CD8-positive, alpha-beta T cell (primary cell): ENCODE measurements at regions of chr17 and their contacts with region 1.

Region 1: GRCh38 chr17:80195731-80196529 is 24.2 kb downstream of the SGSH start:
- DNase-seq: peak; percentile 31 to 81 (median 63)
- ATAC-seq: peak; percentile 52
- H3K4me3 ChIP-seq: no peak overlapping the region
- H3K4me3 Mint-ChIP-seq: no peak overlapping the region
- H3K27ac ChIP-seq: no peak overlapping the region
- H3K27ac Mint-ChIP-seq: no peak overlapping the region
- H3K4me1 ChIP-seq: no peaks in the 10 kb centered on the region
- H3K4me1 Mint-ChIP-seq: no peaks in the 10 kb centered on the region
- H3K27me3 ChIP-seq: no peaks in the 10 kb centered on the region
- H3K27me3 Mint-ChIP-seq: peaks cover 6% of the 10 kb centered on the region
- CTCF ChIP-seq: peak; percentile 97

Region 2: GRCh38 chr17:80109713-80110446 is 86.0 kb before region 1 on chr17:
- CTCF ChIA-PET with region 1: no interaction called
- POLR2A ChIA-PET with region 1: no interaction called
- intact Hi-C with region 1: no loop called
- DNase-seq: no peak
- ATAC-seq: no peak
- H3K4me3 ChIP-seq: no peak overlapping the region
- H3K4me3 Mint-ChIP-seq: no peak overlapping the region
- H3K27ac ChIP-seq: no peak overlapping the region
- H3K27ac Mint-ChIP-seq: no peak overlapping the region
- H3K4me1 ChIP-seq: no peaks in the 10 kb centered on the region
- H3K4me1 Mint-ChIP-seq: no peaks in the 10 kb centered on the region
- H3K27me3 ChIP-seq: no peaks in the 10 kb centered on the region
- H3K27me3 Mint-ChIP-seq: no peaks in the 10 kb centered on the region
- CTCF ChIP-seq: no peak

Region 3: DNA sequence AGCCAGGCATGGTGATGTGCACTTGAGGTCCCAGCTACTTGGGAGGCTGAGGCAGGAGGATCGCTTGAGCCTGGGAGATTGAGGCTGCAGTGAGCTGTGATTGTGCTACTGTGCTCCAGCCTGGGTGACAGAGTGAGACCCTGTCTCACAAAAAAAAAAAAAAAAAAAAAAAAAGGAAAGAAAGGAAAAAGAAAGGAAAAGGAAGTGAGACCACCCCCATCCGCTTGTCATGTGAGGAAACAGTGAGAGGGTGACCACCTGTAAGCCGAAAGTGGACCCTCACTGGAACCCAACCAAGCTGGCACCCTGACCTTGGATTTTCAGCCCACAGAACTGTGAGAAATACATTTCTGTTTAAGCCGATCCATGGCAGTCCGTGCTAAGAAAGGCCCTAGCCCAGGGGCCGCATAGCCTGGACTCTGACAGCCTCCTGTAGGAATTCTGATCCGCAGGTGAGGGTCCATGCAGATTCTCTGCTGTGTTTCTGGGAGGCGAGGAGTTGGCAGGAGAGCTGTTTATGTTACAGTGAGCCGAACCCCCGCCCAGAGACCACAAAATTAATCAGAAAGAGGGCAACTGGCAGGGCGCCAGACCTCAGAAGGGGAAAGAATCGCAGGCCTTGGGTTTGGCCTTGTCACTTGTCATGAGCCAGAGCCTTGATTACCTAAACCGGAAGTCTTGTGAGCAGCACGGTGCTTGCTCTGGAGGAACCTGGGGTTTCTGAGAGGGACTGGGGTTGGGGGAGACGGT is 23.3 kb after region 1 on chr17:
- CTCF ChIA-PET with region 1: interaction called, 11 read pairs
- POLR2A ChIA-PET with region 1: no interaction called
- intact Hi-C with region 1: loop called in 1 of 2 experiments (anchors 1 kb)
- DNase-seq: peak; percentile 84 to 97 (median 95)
- ATAC-seq: peak; percentile 89
- H3K4me3 ChIP-seq: peak overlapping the region; percentile 94 to 96
- H3K4me3 Mint-ChIP-seq: peak overlapping the region; percentile 91
- H3K27ac ChIP-seq: peak overlapping the region; percentile 86 to 91
- H3K27ac Mint-ChIP-seq: peak overlapping the region; percentile 96
- H3K4me1 ChIP-seq: peaks cover 32% of the 10 kb centered on the region
- H3K4me1 Mint-ChIP-seq: peaks cover 36% of the 10 kb centered on the region
- H3K27me3 ChIP-seq: no peaks in the 10 kb centered on the region
- H3K27me3 Mint-ChIP-seq: no peaks in the 10 kb centered on the region
- CTCF ChIP-seq: no peak

Region 4: DNA sequence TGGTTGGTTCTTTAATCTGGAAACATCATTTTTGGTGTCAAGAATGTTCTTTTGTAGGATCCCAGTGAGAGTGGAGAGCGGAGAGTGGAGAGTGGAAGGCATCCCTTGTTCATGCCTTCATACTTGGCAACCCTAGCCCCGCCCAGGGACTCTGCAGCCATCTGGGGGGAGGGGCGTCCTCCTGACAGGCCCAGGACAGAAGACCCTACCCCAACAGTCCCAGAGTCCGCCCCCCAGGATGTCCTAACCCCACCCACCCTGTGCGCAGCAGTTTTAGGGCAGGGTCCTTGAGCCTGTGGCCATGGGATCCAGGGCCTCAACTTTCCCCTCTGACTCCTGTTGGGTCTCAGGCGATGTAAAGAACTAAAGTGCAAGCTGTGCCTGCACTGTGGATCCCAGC is 28.8 kb after region 1 on chr17:
- CTCF ChIA-PET with region 1: interaction called, 11 read pairs
- POLR2A ChIA-PET with region 1: no interaction called
- intact Hi-C with region 1: loop called in 1 of 2 experiments (anchors 1 kb)
- DNase-seq: no peak
- ATAC-seq: no peak
- H3K4me3 ChIP-seq: no peak overlapping the region
- H3K4me3 Mint-ChIP-seq: no peak overlapping the region
- H3K27ac ChIP-seq: no peak overlapping the region
- H3K27ac Mint-ChIP-seq: no peak overlapping the region
- H3K4me1 ChIP-seq: peaks cover 10% of the 10 kb centered on the region
- H3K4me1 Mint-ChIP-seq: peaks cover 10% of the 10 kb centered on the region
- H3K27me3 ChIP-seq: no peaks in the 10 kb centered on the region
- H3K27me3 Mint-ChIP-seq: no peaks in the 10 kb centered on the region
- CTCF ChIP-seq: no peak

Region 5: DNA sequence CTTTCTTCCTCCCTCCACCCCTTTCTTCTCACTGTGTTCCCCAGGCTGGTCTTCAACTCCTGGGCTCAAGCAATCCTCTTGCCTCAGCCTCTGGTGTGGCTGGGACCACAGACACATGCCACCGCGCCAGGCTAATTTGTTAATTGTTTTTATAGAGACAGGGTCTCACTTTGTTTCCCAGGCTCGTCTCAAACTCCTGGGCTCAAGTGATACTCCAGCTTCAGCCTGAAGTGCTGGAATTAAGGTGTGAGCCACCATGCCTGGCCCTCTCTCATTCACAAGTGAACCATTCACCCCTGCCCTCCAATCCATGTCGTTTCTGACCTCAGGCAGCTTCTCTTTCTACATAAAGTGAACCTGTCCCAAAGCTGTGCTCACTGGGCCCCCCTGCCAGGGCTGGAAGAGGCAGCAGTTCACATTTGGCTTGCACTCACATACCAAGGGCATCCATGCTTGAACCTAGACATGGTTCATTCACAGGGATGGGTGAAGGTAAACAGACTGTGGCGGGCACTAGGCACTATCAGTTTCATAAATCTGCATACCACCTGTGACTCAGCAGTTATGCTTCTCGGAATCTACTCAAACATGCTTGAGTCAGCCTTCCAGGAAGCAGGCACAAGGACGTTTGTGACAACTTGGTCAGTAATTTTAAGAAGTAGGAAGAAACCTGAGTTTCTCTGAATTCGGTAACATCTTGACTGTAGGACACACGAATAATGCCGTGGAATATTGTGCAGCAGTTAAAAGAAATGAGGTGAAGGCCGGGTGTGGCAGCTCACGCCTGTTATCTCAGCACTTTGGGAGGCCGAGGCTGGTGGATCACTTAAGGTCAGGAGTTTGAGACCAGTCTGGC is 58.7 kb after region 1 on chr17:
- CTCF ChIA-PET with region 1: interaction called, 83 read pairs
- POLR2A ChIA-PET with region 1: no interaction called
- intact Hi-C with region 1: loop called in 1 of 2 experiments (anchors 1 kb)
- DNase-seq: peak in 5 of 9 experiments; percentile 33 to 75 (median 54)
- ATAC-seq: peak; percentile 34
- H3K4me3 ChIP-seq: no peak overlapping the region
- H3K4me3 Mint-ChIP-seq: no peak overlapping the region
- H3K27ac ChIP-seq: peak overlapping the region in 1 of 2 experiments; percentile 51
- H3K27ac Mint-ChIP-seq: peak overlapping the region; percentile 85
- H3K4me1 ChIP-seq: peaks cover 7% of the 10 kb centered on the region
- H3K4me1 Mint-ChIP-seq: peaks cover 28% of the 10 kb centered on the region
- H3K27me3 ChIP-seq: no peaks in the 10 kb centered on the region
- H3K27me3 Mint-ChIP-seq: no peaks in the 10 kb centered on the region
- CTCF ChIP-seq: no peak

Region 6: DNA sequence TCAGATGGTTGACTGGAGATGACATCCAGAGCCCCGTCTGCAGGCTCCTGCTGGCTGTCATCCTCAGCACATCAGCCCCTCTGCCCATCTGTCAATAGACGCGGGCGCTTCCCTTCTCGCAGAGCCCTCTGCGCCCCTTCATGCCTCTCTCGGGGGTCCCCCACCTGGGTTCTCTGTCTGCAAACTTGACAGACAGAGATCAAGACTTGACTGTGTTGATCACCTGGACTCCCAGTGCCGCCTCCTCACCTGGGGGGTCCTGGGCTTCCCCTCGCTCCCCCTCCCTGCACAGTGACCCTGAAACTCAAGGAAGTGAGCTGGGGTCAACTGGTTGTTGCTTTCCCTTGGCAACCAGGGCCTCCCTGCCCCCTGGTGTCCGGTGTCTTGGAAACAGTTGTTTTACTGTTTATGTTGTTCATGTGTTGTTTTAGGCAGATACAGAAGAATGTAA is 96.6 kb after region 1 on chr17:
- CTCF ChIA-PET with region 1: interaction called, 5 read pairs
- POLR2A ChIA-PET with region 1: no interaction called
- intact Hi-C with region 1: loop called in 1 of 2 experiments (anchors 1 kb)
- DNase-seq: no peak
- ATAC-seq: no peak
- H3K4me3 ChIP-seq: no peak overlapping the region
- H3K4me3 Mint-ChIP-seq: no peak overlapping the region
- H3K27ac ChIP-seq: no peak overlapping the region
- H3K27ac Mint-ChIP-seq: peak overlapping the region; percentile 41
- H3K4me1 ChIP-seq: no peaks in the 10 kb centered on the region
- H3K4me1 Mint-ChIP-seq: peaks cover 7% of the 10 kb centered on the region
- H3K27me3 ChIP-seq: no peaks in the 10 kb centered on the region
- H3K27me3 Mint-ChIP-seq: no peaks in the 10 kb centered on the region
- CTCF ChIP-seq: no peak

Region 7: DNA sequence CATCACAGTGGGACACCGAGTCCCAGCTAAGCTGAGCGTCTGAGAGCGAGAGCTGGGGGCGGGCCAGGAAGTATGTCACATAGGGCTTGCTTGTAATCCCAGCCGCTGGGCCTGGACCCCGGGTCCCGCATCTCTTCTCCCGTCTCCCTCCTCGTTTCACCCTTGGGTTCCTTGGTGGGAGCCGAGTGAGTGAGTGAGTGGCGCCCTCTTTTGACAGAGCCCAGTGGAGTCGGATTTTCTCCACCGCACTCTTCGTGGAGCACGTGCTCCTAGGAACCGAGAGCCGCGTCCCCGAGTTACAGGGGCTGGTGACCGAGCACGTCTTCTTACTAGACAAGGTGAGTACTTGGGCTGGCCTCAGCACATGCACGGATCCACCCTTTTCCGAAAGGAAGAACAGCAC is 168.3 kb after region 1 on chr17:
- CTCF ChIA-PET with region 1: interaction called, 20 read pairs
- POLR2A ChIA-PET with region 1: no interaction called
- intact Hi-C with region 1: loop called (anchors 5 kb)
- DNase-seq: peak in 1 of 9 experiments; percentile 23
- ATAC-seq: no peak
- H3K4me3 ChIP-seq: no peak overlapping the region
- H3K4me3 Mint-ChIP-seq: no peak overlapping the region
- H3K27ac ChIP-seq: no peak overlapping the region
- H3K27ac Mint-ChIP-seq: no peak overlapping the region
- H3K4me1 ChIP-seq: no peaks in the 10 kb centered on the region
- H3K4me1 Mint-ChIP-seq: no peaks in the 10 kb centered on the region
- H3K27me3 ChIP-seq: no peaks in the 10 kb centered on the region
- H3K27me3 Mint-ChIP-seq: no peaks in the 10 kb centered on the region
- CTCF ChIP-seq: no peak

Region 8: DNA sequence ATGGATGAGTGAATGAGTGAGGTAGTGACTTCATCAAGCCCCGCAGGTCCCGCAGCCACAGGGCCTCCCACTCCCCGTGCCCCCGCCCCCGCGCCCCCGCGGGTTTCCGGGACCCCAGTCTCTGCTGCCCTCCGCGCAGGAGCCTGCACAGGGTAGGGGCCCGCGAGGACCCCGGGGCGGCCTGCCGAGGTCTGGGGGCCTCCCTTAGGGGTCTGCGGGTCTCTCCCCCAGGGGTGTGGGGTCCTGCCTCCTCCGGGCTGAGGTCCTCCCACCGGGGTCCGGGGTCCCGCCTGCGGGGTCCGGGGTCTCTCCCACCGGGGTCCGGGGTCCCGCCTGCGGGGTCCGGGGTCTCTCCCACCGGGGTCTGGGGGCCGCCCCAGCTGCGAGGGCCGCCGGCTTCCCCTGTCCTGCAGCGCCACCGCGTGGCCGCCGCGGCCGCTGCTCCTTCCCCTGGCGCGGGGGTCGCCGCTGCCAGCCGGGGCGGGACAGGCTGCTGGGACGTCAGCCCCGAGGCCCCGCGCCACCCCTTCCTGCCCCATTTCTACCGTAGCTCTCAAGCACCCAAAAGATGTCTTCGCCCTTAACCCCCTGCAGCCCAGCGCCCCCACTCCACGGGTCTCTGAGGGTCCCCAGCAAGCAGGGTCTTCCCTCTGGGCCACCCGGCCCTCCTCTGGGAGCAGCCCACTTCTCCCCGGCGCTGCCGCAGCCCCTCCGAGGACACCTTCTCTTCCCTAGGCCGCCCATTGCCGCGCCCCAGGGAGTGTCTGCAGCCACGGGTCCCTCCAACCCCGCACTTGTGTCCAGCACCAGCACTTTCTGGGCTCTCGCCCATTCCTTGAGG is 785.4 kb after region 1 on chr17:
- CTCF ChIA-PET with region 1: no interaction called
- POLR2A ChIA-PET with region 1: no interaction called
- intact Hi-C with region 1: loop called in 1 of 2 experiments (anchors 5 kb)
- DNase-seq: peak in 6 of 9 experiments; percentile 25 to 66 (median 56)
- ATAC-seq: peak; percentile 74
- H3K4me3 ChIP-seq: no peak overlapping the region
- H3K4me3 Mint-ChIP-seq: no peak overlapping the region
- H3K27ac ChIP-seq: no peak overlapping the region
- H3K27ac Mint-ChIP-seq: no peak overlapping the region
- H3K4me1 ChIP-seq: peaks cover 6% of the 10 kb centered on the region
- H3K4me1 Mint-ChIP-seq: peaks cover 7% of the 10 kb centered on the region
- H3K27me3 ChIP-seq: peaks cover 2 to 5% of the 10 kb centered on the region in 2 experiments
- H3K27me3 Mint-ChIP-seq: peaks cover 23% of the 10 kb centered on the region
- CTCF ChIP-seq: peak; percentile 88